Transverse colon (tissue), 4 donors: ENCODE measurements at regions of chr4 and their contacts with region 1.

Region 1: GRCh38 chr4:64623346-64623745 is 214.1 kb upstream of the TECRL start:
- DNase-seq: no peak
- H3K4me3 ChIP-seq: no peak overlapping the region
- H3K27ac ChIP-seq: no peak overlapping the region
- H3K4me1 ChIP-seq: no peaks in the 10 kb centered on the region
- H3K27me3 ChIP-seq: no peaks in the 10 kb centered on the region
- CTCF ChIP-seq: no peak
- EP300 ChIP-seq: no peak
- POLR2A ChIP-seq: no peak

Region 2: DNA sequence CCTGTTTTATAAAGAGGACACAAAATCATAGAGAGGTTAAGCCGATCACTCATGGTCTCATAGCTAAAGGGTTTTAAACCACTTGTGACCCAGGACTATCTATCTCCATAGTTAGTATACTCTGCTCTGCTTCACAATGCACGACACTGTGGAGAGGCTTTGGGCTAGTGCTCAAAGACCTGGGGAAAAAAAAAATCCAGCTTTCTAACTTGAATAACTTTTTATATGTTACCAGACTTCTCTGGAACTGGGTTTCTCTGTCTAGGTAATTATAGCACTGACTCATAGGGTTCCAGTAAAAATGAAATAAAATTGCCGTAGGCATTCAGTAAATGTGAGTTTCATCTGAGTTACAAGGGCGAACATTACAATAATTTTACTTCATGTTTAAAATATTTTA is 59.6 kb after region 1 on chr4:
- in situ Hi-C with region 1: no loop called
- intact Hi-C with region 1: no loop called
- DNase-seq: no peak
- H3K4me3 ChIP-seq: no peak overlapping the region
- H3K27ac ChIP-seq: no peak overlapping the region
- H3K4me1 ChIP-seq: no peaks in the 10 kb centered on the region
- H3K27me3 ChIP-seq: no peaks in the 10 kb centered on the region
- CTCF ChIP-seq: no peak
- EP300 ChIP-seq: no peak
- POLR2A ChIP-seq: no peak

Region 3: GRCh38 chr4:65193985-65194384 is 570.6 kb after region 1 on chr4:
- in situ Hi-C with region 1: no loop called
- intact Hi-C with region 1: loop called (anchors 5 kb)
- DNase-seq: no peak
- H3K4me3 ChIP-seq: no peak overlapping the region
- H3K27ac ChIP-seq: no peak overlapping the region
- H3K4me1 ChIP-seq: no peaks in the 10 kb centered on the region
- H3K27me3 ChIP-seq: no peaks in the 10 kb centered on the region
- CTCF ChIP-seq: no peak
- EP300 ChIP-seq: no peak
- POLR2A ChIP-seq: no peak